ENCODE measurements at regions of chr12 and their contacts with region 1.

Region 1: GRCh38 chr12:15584366-15585041 is 204.7 kb downstream of the EPS8 start:
- DNase-seq: no peak
- H3K4me3 ChIP-seq: no peak overlapping the region
- H3K27ac ChIP-seq: no peak overlapping the region
- H3K4me1 ChIP-seq: no peaks in the 10 kb centered on the region
- H3K27me3 ChIP-seq: peaks cover 0 to 43% (median 0%) of the 10 kb centered on the region in 4 donors
- CTCF ChIP-seq: peak; percentile 26 to 62 (median 50)
- POLR2A ChIP-seq: no peak

Region 2: GRCh38 chr12:15488481-15488880 is 96.0 kb before region 1 on chr12:
- intact Hi-C with region 1: no loop called
- DNase-seq: no peak
- H3K4me3 ChIP-seq: no peak overlapping the region
- H3K27ac ChIP-seq: no peak overlapping the region
- H3K4me1 ChIP-seq: no peaks in the 10 kb centered on the region
- H3K27me3 ChIP-seq: peaks cover 0 to 14% (median 0%) of the 10 kb centered on the region in 4 donors
- CTCF ChIP-seq: no peak
- POLR2A ChIP-seq: no peak

Region 3: DNA sequence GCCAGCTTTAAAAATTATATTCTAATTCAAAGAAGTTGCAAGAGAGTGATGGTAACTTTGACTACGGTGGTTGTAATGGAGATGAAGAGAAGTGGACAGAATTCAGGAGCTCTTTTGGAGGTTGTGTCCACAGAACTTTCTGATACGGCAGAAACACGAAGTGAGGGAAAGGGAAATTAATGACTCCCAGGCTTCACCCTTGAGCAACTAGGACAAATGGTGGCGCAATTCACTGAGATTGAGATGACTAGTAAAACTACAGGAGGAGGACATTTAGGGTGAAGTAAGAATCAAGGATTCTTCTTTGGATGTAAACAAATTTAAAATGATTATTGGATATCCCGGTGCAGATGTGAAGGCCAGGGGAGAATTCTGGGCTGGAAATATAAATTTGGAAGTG is 49.6 kb before region 1 on chr12:
- intact Hi-C with region 1: loop called (anchors 5 kb)
- DNase-seq: no peak
- H3K4me3 ChIP-seq: no peak overlapping the region
- H3K27ac ChIP-seq: peak overlapping the region in 2 of 4 donors; percentile 36 to 37
- H3K4me1 ChIP-seq: no peaks in the 10 kb centered on the region
- H3K27me3 ChIP-seq: no peaks in the 10 kb centered on the region
- CTCF ChIP-seq: no peak
- POLR2A ChIP-seq: no peak

Region 4: DNA sequence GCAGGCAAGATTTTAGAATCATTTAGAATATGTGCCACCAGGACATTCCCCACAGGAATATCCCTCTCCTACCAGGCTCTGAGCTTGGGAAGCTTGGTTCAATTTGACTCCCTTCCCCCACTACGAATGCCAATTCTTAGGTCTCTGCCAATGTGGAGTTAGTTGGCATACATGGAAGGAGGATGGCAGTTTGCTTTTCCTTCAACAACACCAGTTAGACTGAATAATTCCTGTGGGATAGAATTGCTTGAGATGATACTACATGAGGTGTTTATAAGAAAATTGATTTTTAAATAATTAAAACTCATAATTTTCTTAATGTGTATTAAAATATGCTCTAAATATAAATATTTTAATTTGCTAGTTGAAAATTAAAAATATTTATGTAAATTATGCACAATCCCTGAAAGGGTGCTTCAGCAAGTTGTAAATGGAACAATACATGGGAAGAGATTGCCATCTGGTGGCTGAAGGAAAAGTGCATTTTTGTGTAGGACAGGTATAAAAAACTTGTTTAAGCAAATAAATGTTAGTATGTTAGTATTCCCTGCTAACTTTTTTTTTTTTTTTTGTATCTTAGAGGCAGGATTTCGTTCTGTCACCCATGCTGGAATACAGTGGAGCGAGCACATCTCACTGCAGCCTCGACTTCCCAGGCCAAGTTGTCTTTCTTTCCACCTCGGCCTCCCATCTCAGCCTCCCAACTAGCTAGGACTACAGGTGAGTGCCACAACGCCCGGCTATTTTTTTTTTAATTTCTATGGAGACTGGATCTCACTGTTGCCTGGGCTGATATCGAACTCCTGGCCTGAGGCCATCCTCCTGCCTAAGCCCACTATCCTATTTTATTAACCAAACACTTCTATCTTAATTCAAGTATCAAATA is 271.8 kb after region 1 on chr12:
- intact Hi-C with region 1: loop called (anchors 5 kb)
- DNase-seq: no peak
- H3K4me3 ChIP-seq: no peak overlapping the region
- H3K27ac ChIP-seq: peak overlapping the region in 2 of 4 donors; percentile 23 to 42
- H3K4me1 ChIP-seq: peaks cover 0 to 8% (median 2%) of the 10 kb centered on the region in 3 donors
- H3K27me3 ChIP-seq: no peaks in the 10 kb centered on the region
- CTCF ChIP-seq: peak; percentile 31 to 90 (median 82)
- POLR2A ChIP-seq: no peak